Activated naive CD4-positive, alpha-beta T cell treated with anti-CD3 and anti-CD28 coated beads, Interleukin-2, amount 10 ng/mL, durations not matched to agents 7 days and 5 days (primary cell): ENCODE measurements at regions of chr4 and their contacts with region 1.

Region 1: DNA sequence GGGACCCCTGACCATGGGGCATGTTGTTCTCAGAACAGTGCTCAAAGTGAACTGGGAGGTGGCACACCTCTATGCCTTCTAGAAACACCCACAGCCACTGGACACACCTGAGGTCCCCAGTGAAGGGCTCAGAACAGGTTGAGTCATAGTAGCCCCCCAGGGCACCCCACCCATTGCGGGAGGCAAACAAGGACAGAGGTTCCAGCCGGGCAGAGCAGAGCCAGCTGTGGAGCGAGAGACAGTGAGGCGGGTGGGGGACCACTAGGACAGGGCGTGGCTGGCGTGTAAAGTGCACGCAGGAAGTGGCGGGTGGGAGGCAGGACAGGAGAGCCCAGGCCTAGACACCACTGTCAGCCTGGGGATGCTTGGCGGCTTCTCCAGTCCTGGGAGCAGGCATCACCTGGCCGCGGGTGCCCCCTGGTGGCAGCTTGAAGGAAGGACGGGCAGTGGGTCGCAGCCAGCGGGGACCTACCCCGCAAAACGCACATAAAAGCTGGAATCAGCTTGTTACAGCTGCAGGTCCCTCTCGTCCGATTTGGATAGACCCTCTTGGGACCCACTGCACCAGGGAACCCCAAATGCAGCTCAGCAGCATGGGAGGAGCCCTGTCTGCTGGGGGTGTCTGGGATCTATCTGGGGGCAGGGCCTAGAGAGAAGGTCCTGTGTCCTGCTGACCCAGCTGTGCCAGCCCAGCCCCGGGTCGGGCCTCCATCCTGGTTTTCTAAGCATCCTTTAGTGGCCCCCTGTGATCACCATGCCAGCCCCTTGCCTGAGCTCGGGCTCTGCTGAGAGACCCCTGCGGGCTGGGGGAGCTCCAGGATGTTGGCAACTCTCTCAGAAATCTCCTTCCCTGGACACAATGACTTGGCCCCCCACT is 57.6 kb downstream of the WFS1 start:
- DNase-seq: peak; percentile 84
- H3K4me3 Mint-ChIP-seq: no peak overlapping the region
- H3K27ac Mint-ChIP-seq: no peak overlapping the region
- H3K4me1 Mint-ChIP-seq: peaks cover 10% of the 10 kb centered on the region
- H3K27me3 Mint-ChIP-seq: peaks cover 66% of the 10 kb centered on the region

Region 2: GRCh38 chr4:5998333-5998936 is 328.8 kb before region 1 on chr4:
- CTCF ChIA-PET with region 1: interaction called, 25 read pairs
- DNase-seq: peak; percentile 60
- H3K4me3 Mint-ChIP-seq: no peak overlapping the region
- H3K27ac Mint-ChIP-seq: no peak overlapping the region
- H3K4me1 Mint-ChIP-seq: no peaks in the 10 kb centered on the region
- H3K27me3 Mint-ChIP-seq: peaks cover 10% of the 10 kb centered on the region

Region 3: GRCh38 chr4:6269616-6270511 is 57.4 kb before region 1 on chr4 and contains the start of gene WFS1:
- CTCF ChIA-PET with region 1: interaction called, 504 read pairs
- DNase-seq: peak; percentile 98
- H3K4me3 Mint-ChIP-seq: peak within 1 kb of the TSS; percentile 77
- H3K27ac Mint-ChIP-seq: peak within 1 kb of the TSS; percentile 73
- H3K4me1 Mint-ChIP-seq: peaks cover 18% of the 10 kb centered on the region
- H3K27me3 Mint-ChIP-seq: peaks cover 57% of the 10 kb centered on the region

Region 4: GRCh38 chr4:6316461-6317003 is 10.7 kb before region 1 on chr4:
- CTCF ChIA-PET with region 1: interaction called, 23 read pairs
- DNase-seq: no peak
- H3K4me3 Mint-ChIP-seq: no peak overlapping the region
- H3K27ac Mint-ChIP-seq: no peak overlapping the region
- H3K4me1 Mint-ChIP-seq: peaks cover 2% of the 10 kb centered on the region
- H3K27me3 Mint-ChIP-seq: peaks cover 22% of the 10 kb centered on the region

Region 5: DNA sequence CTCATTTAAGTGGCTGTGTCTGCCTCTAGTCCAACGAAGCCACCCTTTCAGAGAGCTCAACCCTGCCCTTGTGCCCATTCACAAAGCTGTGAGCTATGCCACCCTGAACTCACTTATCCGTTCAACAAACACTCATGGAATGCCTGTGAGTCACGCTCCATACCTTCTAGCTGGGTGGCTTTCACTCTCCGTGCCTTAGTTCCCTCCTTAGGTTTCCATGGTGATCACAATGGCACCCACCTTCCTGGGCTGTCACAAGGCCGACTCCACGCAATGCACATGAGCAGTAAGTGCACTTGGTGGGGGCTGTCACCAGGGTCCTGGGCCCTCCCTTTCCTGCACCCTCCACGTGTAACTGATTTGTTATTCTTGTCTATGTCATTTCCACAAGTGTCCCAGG is 182.3 kb after region 1 on chr4:
- CTCF ChIA-PET with region 1: no interaction called
- DNase-seq: no peak
- H3K4me3 Mint-ChIP-seq: no peak overlapping the region
- H3K27ac Mint-ChIP-seq: no peak overlapping the region
- H3K4me1 Mint-ChIP-seq: no peaks in the 10 kb centered on the region
- H3K27me3 Mint-ChIP-seq: no peaks in the 10 kb centered on the region

Region 6: DNA sequence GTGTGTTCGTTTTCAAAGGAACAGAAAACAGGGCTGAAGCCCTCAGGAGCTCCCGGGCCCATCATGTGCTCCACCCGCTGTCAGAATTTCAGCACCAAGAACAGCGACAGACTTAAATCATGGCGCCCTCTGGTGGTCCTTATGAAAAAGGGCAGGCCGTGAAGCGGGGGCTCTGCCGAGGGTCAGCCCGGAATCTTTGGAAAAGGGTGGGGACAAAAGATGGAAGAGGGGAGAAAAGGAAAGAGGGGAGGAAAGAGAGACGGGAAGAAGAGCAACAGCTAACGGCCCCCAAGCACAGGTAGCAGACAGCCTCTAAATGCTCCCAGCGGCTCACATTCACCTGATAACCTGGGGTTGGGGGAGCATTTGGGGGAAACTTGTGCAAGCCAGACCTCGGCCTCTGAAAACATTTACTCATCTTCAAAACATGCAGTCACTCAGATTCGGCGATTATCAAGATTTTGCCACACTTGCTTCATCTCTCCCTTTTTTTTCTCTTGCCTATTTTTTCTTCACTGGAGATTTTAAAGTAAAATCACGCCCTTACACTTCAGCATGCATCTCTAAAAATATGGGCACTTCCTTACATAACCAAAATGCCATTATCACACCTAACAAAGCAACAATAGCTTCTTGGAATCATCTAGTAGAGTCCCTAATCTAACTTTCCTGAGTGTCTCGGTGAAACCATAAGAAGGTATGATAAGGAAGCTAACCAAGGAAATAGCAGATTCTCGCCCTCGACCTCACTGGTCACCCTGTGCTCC is 219.6 kb after region 1 on chr4:
- CTCF ChIA-PET with region 1: interaction called, 22 read pairs
- DNase-seq: peak; percentile 66
- H3K4me3 Mint-ChIP-seq: no peak overlapping the region
- H3K27ac Mint-ChIP-seq: no peak overlapping the region
- H3K4me1 Mint-ChIP-seq: no peaks in the 10 kb centered on the region
- H3K27me3 Mint-ChIP-seq: peaks cover 24% of the 10 kb centered on the region

Region 7: DNA sequence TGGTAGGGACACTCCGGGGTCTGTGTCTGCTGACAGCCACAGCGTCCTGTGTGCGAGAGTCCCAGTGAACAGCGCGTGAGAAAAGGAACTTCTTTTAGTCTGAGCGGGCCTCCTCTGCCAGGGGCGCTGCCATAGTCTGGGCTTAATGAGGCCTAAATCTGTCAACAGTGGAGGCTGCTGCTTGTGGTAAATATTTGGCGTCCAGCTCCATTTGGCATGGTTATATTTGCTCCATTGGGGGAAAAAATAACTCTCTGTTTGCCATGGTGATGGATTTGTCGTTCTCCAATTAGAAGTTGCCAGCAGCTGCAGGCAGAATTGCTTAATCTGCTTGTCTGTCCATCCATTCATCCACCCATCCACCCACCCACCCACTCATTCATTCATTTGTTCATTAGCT is 1178.8 kb after region 1 on chr4:
- CTCF ChIA-PET with region 1: no interaction called
- DNase-seq: no peak
- H3K4me3 Mint-ChIP-seq: no peak overlapping the region
- H3K27ac Mint-ChIP-seq: no peak overlapping the region
- H3K4me1 Mint-ChIP-seq: no peaks in the 10 kb centered on the region
- H3K27me3 Mint-ChIP-seq: peaks cover 31% of the 10 kb centered on the region